PC-3 (cell line): ENCODE measurements at regions of chr2 and their contacts with region 1.

Region 1: GRCh38 chr2:44955593-44956392 is 14.3 kb downstream of the SIX3 start:
- DNase-seq: peak; percentile 76
- ATAC-seq: peak; percentile 76
- H3K4me3 ChIP-seq: peak overlapping the region; percentile 68
- H3K27ac ChIP-seq: no peak overlapping the region
- H3K4me1 ChIP-seq: peaks cover 43% of the 10 kb centered on the region
- H3K27me3 ChIP-seq: no peaks in the 10 kb centered on the region
- CTCF ChIP-seq: peak; percentile 86

Region 2: GRCh38 chr2:44392338-44392943 is 563.4 kb before region 1 on chr2:
- CTCF ChIA-PET with region 1: interaction called, 9 read pairs
- POLR2A ChIA-PET with region 1: no interaction called
- intact Hi-C with region 1: loop called (anchors 1 kb)
- DNase-seq: peak; percentile 73
- ATAC-seq: no peak
- H3K4me3 ChIP-seq: no peak overlapping the region
- H3K27ac ChIP-seq: no peak overlapping the region
- H3K4me1 ChIP-seq: no peaks in the 10 kb centered on the region
- H3K27me3 ChIP-seq: no peaks in the 10 kb centered on the region
- CTCF ChIP-seq: peak; percentile 72

Region 3: GRCh38 chr2:44560352-44560751 is 395.4 kb before region 1 on chr2:
- CTCF ChIA-PET with region 1: no interaction called
- POLR2A ChIA-PET with region 1: no interaction called
- intact Hi-C with region 1: loop called (anchors 2 kb)
- DNase-seq: peak; percentile 58
- ATAC-seq: no peak
- H3K4me3 ChIP-seq: no peak overlapping the region
- H3K27ac ChIP-seq: no peak overlapping the region
- H3K4me1 ChIP-seq: peaks cover 10% of the 10 kb centered on the region
- H3K27me3 ChIP-seq: no peaks in the 10 kb centered on the region
- CTCF ChIP-seq: peak; percentile 67

Region 4: GRCh38 chr2:44715671-44716081 is 240.1 kb before region 1 on chr2:
- CTCF ChIA-PET with region 1: interaction called, 6 read pairs
- POLR2A ChIA-PET with region 1: no interaction called
- intact Hi-C with region 1: loop called (anchors 1 kb)
- DNase-seq: peak; percentile 72
- ATAC-seq: peak; percentile 87
- H3K4me3 ChIP-seq: no peak overlapping the region
- H3K27ac ChIP-seq: no peak overlapping the region
- H3K4me1 ChIP-seq: no peaks in the 10 kb centered on the region
- H3K27me3 ChIP-seq: no peaks in the 10 kb centered on the region
- CTCF ChIP-seq: peak; percentile 82

Region 5: DNA sequence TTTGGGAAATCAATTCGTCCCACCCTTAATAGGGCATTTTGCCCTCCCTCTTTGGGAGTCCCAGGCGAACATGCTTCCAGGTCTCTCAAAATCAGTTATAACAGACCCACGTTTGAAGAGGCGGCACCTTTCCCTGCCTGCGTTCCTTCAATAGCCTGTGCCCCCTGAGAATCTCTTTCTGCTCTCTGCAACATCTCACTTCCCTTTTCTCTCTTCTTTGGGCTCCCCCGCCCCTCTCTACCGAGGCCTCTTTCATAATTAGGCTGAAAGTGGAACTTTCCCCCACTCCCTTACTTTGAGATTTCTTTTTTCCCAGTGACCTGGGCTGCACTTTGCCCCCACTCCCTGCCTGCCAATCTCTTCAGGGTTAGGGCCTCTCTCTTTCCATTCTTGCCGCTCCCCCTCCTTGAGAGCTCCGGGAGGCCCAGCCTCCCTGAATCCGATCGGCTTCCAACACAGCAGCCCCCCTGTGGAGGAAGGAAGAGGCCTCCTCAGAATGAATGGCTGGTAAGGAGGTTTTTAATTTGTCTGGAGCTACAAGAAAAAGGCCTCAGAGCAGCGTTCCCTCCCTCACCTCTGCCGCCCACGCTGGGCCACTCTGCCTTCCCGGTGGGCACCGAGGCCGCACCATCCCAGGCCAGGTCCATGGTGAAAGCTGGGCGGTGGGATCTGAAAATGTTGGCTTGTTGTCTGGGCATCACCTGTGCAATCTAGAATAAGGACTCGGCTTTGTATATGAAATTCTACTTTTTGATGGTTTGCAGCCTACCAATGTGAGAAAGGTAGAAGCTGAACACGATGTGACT is 176.9 kb before region 1 on chr2:
- CTCF ChIA-PET with region 1: no interaction called
- POLR2A ChIA-PET with region 1: no interaction called
- intact Hi-C with region 1: no loop called
- DNase-seq: no peak
- ATAC-seq: no peak
- H3K4me3 ChIP-seq: no peak overlapping the region
- H3K27ac ChIP-seq: no peak overlapping the region
- H3K4me1 ChIP-seq: no peaks in the 10 kb centered on the region
- H3K27me3 ChIP-seq: no peaks in the 10 kb centered on the region
- CTCF ChIP-seq: no peak

Region 6: GRCh38 chr2:44897406-44897805 is 58.4 kb before region 1 on chr2:
- CTCF ChIA-PET with region 1: no interaction called
- POLR2A ChIA-PET with region 1: no interaction called
- intact Hi-C with region 1: loop called (anchors 1 kb)
- DNase-seq: peak; percentile 32
- ATAC-seq: no peak
- H3K4me3 ChIP-seq: no peak overlapping the region
- H3K27ac ChIP-seq: no peak overlapping the region
- H3K4me1 ChIP-seq: no peaks in the 10 kb centered on the region
- H3K27me3 ChIP-seq: peaks cover 27% of the 10 kb centered on the region
- CTCF ChIP-seq: peak; percentile 50